Right ventricle myocardium superior (tissue), 1 donor: ENCODE measurements at regions of chr20 and their contacts with region 1.

Region 1: GRCh38 chr20:50189681-50190582 is 698 bp upstream of the CEBPB start:
- DNase-seq: peak; percentile 94
- ATAC-seq: peak; percentile 77

Region 2: DNA sequence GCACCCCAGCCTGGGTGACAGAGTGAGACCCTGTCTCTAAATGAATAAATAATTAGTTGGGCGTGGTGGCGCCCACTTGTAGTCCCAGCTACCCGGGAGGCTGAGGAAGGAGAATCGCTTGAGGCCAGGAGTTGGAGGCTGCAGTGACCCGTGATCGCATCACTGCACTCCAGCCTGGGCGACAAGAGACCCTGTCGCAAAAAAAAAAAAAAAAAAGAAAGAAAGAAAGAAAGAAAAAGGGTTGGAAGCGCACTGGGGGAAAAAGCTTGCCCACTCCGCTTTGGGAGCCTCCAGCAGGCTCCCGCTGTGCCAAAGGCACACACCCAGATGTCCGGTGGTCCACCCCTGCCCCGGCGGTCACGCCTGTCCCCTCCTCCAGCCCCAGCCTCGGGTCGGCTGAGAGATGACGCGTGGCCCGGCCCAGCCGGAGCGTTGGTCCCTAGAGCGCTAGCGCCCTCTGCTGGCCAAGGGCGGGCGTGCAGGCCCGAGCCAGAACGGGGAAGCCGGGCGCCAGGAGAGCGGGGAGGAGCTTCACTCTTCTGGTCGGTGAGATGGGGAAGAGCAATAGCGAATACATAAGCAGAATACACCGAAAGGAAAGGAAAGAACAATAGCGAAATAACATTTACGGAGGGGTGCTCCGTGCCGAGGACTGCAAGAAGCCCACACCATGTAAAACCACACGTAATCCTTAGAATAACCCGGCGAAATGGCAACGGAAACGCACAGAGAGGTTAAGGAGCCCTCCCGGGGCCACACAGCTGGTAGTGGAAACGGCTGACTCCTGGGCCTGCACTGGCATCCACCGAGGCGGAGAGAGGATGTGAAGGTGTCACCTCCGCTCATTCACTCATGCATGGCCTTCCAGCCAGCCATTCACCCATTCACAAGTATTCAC is 118.7 kb before region 1 on chr20:
- intact Hi-C with region 1: no loop called
- DNase-seq: peak; percentile 95
- ATAC-seq: peak; percentile 95

Region 3: GRCh38 chr20:50264534-50265145 is 74.7 kb after region 1 on chr20:
- intact Hi-C with region 1: no loop called
- DNase-seq: peak; percentile 23
- ATAC-seq: no peak

Region 4: DNA sequence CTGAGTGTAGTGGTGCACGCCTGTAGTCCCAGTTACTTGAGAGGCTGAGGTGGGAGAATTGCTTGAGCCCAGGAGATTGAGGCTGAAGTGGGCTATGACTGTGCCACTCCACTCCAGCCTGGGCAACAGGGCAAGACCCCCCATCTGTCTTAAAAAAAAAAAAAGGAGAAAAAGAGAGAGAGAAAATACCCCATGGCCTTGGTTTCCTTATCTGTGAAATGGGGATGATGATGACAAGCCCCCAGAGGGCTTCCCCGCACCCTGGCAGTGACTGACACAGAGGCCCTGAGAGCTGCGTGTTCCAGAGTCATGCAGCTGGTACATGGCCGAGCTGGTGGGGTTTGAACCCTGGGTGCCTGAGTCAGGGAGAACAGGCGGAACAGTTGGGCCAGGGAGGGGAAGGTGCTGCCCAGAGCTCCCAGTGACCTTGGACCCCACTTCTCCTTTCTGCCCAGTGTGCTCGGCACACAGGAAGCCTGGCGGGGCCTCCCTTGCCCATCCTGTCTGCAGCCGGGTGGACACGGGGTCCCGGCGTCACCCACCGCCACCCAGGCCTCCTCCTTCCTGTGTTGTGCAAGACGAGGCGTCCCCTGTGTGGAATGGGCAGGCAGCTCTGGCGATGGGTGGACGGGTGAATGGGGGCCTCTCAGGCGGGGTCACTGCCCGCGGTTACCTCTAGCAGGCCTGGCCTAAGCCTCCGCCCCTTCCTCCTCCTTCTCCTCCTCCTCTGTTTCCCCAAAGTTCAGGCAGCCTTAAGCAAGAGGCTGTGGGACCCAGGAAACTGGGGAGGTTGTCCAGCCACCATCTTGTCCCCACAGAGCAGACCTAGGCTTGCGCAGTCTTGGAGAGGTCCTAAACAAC is 84.9 kb after region 1 on chr20:
- intact Hi-C with region 1: loop called (anchors 5 kb)
- DNase-seq: peak; percentile 90
- ATAC-seq: peak; percentile 36

Region 5: GRCh38 chr20:50338479-50339391 is 148.8 kb after region 1 on chr20:
- intact Hi-C with region 1: no loop called
- DNase-seq: no peak
- ATAC-seq: peak; percentile 8

Region 6: GRCh38 chr20:50380641-50381040 is 190.7 kb after region 1 on chr20:
- intact Hi-C with region 1: loop called (anchors 5 kb)
- DNase-seq: peak; percentile 62
- ATAC-seq: peak; percentile 14

Region 7: GRCh38 chr20:50395258-50395729 is 205.4 kb after region 1 on chr20:
- intact Hi-C with region 1: loop called (anchors 5 kb)
- DNase-seq: peak; percentile 92
- ATAC-seq: peak; percentile 82

Region 8: GRCh38 chr20:50460460-50461267 is 270.7 kb after region 1 on chr20:
- intact Hi-C with region 1: loop called (anchors 1 kb)
- DNase-seq: peak; percentile 94
- ATAC-seq: peak; percentile 92

Region 9: DNA sequence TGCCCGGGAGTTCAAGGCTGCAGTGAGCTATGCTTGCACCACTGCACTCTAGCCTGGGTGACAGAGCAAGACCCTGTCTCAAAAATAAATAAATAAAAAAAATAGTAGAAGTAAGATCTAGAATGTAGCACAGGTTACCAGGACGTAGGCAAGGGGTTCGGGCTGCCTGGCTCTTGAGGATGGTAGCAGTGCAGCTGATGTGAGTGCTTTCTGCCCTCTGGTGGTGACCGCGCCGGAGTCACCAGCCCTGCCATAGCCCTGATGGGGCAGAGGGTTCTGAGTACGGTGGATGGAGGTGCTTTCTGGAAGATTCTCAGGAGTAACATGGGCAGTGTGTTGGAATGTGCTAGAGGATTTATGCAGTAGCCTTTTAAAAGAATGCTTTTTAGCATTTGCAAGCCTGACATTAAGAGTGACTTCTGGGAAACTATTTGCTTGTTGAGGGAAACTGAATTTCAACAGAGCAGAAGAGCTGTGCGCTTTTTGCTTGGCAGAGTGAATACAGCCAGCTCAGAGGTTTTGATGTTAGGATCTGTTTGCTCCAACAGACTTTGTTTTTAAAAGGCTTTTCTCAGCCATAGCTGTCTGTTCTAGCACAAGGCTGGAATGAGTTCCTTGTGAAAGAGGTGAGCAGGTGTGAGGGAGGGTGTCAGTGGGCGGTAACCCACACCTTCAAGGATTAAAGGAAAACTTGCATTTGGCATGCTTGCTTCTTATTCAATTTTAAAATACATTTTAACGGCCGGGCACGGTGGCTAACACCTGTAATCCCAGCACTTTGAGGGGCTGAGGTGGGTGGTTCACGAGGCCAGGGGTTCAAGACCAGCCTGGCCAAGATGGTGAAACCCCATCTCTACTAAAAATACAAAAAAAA is 386.2 kb after region 1 on chr20:
- intact Hi-C with region 1: loop called (anchors 5 kb)
- DNase-seq: peak; percentile 82
- ATAC-seq: peak; percentile 64